ENCODE measurements at regions of chr12 and their contacts with region 1.

Region 1: DNA sequence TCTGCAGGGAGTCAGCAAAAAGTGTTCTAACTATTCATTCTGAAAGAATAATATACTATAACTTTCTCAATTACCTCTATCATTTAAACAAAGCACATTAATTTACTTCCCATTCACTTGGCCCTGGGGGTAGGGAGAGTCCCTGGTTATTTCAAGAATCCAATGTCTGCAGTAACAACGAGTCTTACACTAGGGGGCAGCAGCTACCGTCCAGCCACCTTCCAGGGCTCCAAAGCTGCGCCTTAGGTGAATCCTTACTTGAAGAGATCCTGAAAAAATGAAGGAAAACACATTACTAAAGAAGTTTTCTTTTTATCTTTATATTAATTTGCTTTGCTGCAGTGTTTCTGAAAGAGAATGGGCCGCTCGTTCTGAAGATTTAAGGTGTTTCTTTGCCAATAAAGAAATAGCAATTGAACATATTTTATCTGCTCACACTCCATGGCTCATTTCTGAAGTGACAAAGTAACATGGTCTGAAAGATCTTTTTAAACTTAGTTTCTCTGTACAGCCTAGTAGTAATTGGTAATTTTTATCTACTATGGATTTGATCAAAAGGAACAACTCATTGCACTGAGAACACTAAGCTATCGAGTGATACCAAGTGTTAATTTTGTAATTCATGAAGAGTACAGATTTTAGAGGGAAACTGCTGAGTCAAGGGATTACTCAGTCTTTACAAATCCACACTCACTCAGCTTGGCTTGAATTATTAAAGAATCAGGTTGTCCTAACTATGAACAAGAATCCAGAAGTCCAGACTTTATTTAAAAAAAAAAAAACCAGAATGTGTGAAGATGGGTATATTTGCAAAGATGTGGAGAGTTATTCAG is 27.6 kb downstream of the BHLHE41 start:
- DNase-seq: peak in 2 of 3 donors; percentile 64 to 74
- ATAC-seq: peak; percentile 91
- H3K4me3 ChIP-seq: no peak overlapping the region
- H3K4me1 ChIP-seq: peaks cover 4% of the 10 kb centered on the region
- CTCF ChIP-seq: peak; percentile 74

Region 2: GRCh38 chr12:26422839-26423398 is 325.7 kb after region 1 on chr12:
- intact Hi-C with region 1: loop called in 1 of 2 experiments (anchors 5 kb)
- DNase-seq: no peak
- ATAC-seq: no peak
- H3K4me3 ChIP-seq: no peak overlapping the region
- H3K4me1 ChIP-seq: no peaks in the 10 kb centered on the region
- CTCF ChIP-seq: no peak

Region 3: GRCh38 chr12:26651566-26652188 is 554.4 kb after region 1 on chr12:
- intact Hi-C with region 1: loop called in 1 of 2 experiments (anchors 10 kb)
- DNase-seq: peak in 1 of 3 donors; percentile 70
- ATAC-seq: peak; percentile 83
- H3K4me3 ChIP-seq: no peak overlapping the region
- H3K4me1 ChIP-seq: no peaks in the 10 kb centered on the region
- CTCF ChIP-seq: peak; percentile 54

Measured in mucosa of descending colon (tissue), 3 donors.